ENCODE measurements at regions of chr11 and their contacts with region 1.

Region 1: DNA sequence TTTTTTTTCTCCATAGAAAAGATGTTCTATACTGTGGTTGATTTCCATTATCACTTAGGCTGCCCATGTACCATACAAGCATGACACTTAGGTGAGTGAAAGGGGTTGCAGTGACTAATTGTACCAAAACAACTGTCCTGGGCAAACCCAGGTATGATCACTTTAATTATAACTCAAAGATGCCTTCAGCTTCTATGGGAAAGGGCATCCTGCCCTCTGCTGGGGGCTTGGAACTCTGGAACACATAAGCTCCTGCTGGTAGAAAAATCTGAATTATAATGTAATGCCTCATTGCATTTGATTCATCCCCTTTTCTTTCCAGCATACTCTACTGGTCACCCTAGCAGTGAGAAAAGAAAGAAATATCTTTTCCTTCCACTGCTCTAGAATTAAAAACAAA is 206.3 kb downstream of the DDX10 start:
- DNase-seq: peak; percentile 13
- CTCF ChIP-seq: peak; percentile 63

Region 2: DNA sequence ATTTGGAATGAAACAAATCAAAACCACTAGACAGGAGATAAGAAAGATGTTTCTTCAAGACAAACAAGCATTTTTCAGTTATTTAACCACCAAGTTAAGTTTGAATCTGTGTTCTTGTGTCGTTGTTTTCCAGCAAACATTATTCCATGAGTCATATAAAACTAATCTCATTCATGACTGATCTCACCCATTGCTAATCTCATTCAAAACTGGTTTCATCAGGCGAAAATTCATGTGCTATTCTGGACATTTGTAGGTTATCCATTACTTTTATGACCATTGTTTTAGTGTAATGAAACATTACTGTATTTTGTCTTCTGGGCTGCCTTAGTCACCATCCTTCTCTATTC is 15.5 kb after region 1 on chr11:
- CTCF ChIA-PET with region 1: interaction called, 10 read pairs
- POLR2A ChIA-PET with region 1: no interaction called
- DNase-seq: no peak
- CTCF ChIP-seq: no peak

Region 3: GRCh38 chr11:108985945-108986279 is 114.8 kb after region 1 on chr11:
- CTCF ChIA-PET with region 1: no interaction called
- POLR2A ChIA-PET with region 1: no interaction called
- DNase-seq: no peak
- CTCF ChIP-seq: no peak